ENCODE measurements at regions of chr1 and their contacts with region 1.

Region 1: GRCh38 chr1:43991476-43992231 is at the start of gene CCDC24:
- DNase-seq: peak; percentile 77 to 81
- ATAC-seq: peak; percentile 89 to 92
- H3K4me3 ChIP-seq: peak within 1 kb of the TSS; percentile 63 to 95 (median 70)
- H3K27ac ChIP-seq: peak within 1 kb of the TSS; percentile 71 to 83 (median 76)
- H3K4me1 ChIP-seq: peaks cover 0 to 17% of the 10 kb centered on the region in 2 donors
- H3K27me3 ChIP-seq: no peaks in the 10 kb centered on the region
- CTCF ChIP-seq: no peak
- POLR2A ChIP-seq: peak; percentile 6 to 30
- total RNA-seq, gene CCDC24: 0.73 to 2.9 (median 1.2) TPM

Region 2: DNA sequence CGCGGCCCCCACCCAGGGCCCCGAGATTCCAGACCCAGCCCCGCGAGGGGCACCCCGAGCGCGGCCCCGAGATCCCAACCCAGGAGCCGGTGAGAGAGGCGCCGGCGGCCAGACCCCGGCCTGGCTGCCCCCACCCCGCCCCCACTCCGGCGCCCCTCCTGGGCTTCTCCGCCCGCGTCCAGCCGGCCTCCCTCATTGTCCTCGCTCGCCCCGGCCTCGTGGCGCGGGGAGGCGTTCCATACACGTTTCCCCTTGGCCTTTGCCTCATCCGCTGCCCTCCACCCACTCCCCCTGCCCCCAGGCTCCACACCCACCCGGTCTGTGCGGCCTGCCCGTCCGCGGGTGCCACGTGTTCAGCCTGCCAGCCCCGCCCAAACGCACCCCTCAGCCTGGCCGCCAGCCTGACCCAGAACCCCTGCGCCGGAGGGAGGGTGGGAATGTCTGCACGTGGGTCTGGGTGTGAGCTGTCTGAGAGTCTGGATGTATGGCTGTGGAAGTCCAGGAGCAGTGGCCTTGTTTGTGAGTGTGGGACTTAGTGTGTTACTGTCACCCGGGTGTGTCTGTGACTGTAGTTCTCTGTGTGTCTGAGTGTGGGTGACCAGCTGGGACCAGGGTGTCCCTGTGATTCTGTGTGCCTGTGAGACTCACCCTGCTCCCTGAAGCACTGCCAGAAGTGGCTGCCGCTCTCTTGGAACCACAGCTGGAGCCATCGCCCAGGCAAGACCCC is 12.0 kb before region 1 on chr1:
- in situ Hi-C with region 1: no loop called
- intact Hi-C with region 1: loop called (anchors 1 kb)
- DNase-seq: peak in 1 of 2 donors; percentile 19
- ATAC-seq: peak in 1 of 2 donors; percentile 21
- H3K4me3 ChIP-seq: peak overlapping the region; percentile 63 to 92 (median 68)
- H3K27ac ChIP-seq: peak overlapping the region; percentile 60 to 70 (median 64)
- H3K4me1 ChIP-seq: peaks cover 25 to 36% of the 10 kb centered on the region in 2 donors
- H3K27me3 ChIP-seq: no peaks in the 10 kb centered on the region
- CTCF ChIP-seq: no peak
- POLR2A ChIP-seq: no peak

Region 3: GRCh38 chr1:44029906-44030604 is 38.4 kb after region 1 on chr1:
- in situ Hi-C with region 1: no loop called
- intact Hi-C with region 1: loop called (anchors 5 kb)
- DNase-seq: peak; percentile 82 to 85
- ATAC-seq: peak; percentile 90 to 92
- H3K4me3 ChIP-seq: peak overlapping the region; percentile 78 to 92 (median 82)
- H3K27ac ChIP-seq: peak overlapping the region; percentile 77 to 95 (median 91)
- H3K4me1 ChIP-seq: peaks cover 7 to 22% of the 10 kb centered on the region in 2 donors
- H3K27me3 ChIP-seq: no peaks in the 10 kb centered on the region
- CTCF ChIP-seq: no peak
- POLR2A ChIP-seq: peak; percentile 57 to 78

Region 4: GRCh38 chr1:44049839-44050238 is 58.2 kb after region 1 on chr1:
- in situ Hi-C with region 1: loop called in 1 of 4 experiments (anchors 10 kb)
- intact Hi-C with region 1: no loop called
- DNase-seq: no peak
- ATAC-seq: no peak
- H3K4me3 ChIP-seq: no peak overlapping the region
- H3K27ac ChIP-seq: no peak overlapping the region
- H3K4me1 ChIP-seq: no peaks in the 10 kb centered on the region
- H3K27me3 ChIP-seq: no peaks in the 10 kb centered on the region
- CTCF ChIP-seq: no peak
- POLR2A ChIP-seq: no peak

Region 5: GRCh38 chr1:44305962-44306422 is 314.3 kb after region 1 on chr1:
- in situ Hi-C with region 1: no loop called
- intact Hi-C with region 1: no loop called
- DNase-seq: no peak
- ATAC-seq: no peak
- H3K4me3 ChIP-seq: no peak overlapping the region
- H3K27ac ChIP-seq: no peak overlapping the region
- H3K4me1 ChIP-seq: peaks cover 5% of the 10 kb centered on the region in 2 donors
- H3K27me3 ChIP-seq: no peaks in the 10 kb centered on the region
- CTCF ChIP-seq: no peak
- POLR2A ChIP-seq: no peak

Measured in gastrocnemius medialis (tissue), 4 donors.